ENCODE measurements at regions of chr6 and their contacts with region 1.

Region 1: GRCh38 chr6:17886891-17887290 is 100.5 kb downstream of the KIF13A start:
- DNase-seq: no peak

Region 2: GRCh38 chr6:17950095-17950494 is 63.2 kb after region 1 on chr6:
- intact Hi-C with region 1: loop called (anchors 1 kb)
- DNase-seq: no peak

Region 3: GRCh38 chr6:19434065-19434464 is 1547.2 kb after region 1 on chr6:
- intact Hi-C with region 1: no loop called
- DNase-seq: no peak

Measured in posterior cingulate gyrus (tissue), 11 donors.